Activated CD4-positive, alpha-beta memory T cell treated with anti-CD3 and anti-CD28 coated beads for 36 hours (primary cell): ENCODE measurements at regions of chrX and their contacts with region 1.

Region 1: GRCh38 chrX:155216179-155216939 is at the start of gene VBP1:
- DNase-seq: peak; percentile 92
- H3K4me3 Mint-ChIP-seq: peak within 1 kb of the TSS; percentile 87
- H3K27ac Mint-ChIP-seq: peak within 1 kb of the TSS; percentile 83
- H3K4me1 Mint-ChIP-seq: peaks cover 19% of the 10 kb centered on the region
- H3K27me3 Mint-ChIP-seq: no peaks in the 10 kb centered on the region
- total RNA-seq, gene VBP1: 89.7 to 100 TPM

Region 2: GRCh38 chrX:155094468-155095061 is 121.8 kb before region 1 on chrX:
- CTCF ChIA-PET with region 1: interaction called, 5 read pairs
- POLR2A ChIA-PET with region 1: no interaction called
- intact Hi-C with region 1: loop called (anchors 10 kb)
- DNase-seq: peak; percentile 17
- H3K4me3 Mint-ChIP-seq: no peak overlapping the region
- H3K27ac Mint-ChIP-seq: no peak overlapping the region
- H3K4me1 Mint-ChIP-seq: peaks cover 6% of the 10 kb centered on the region
- H3K27me3 Mint-ChIP-seq: no peaks in the 10 kb centered on the region

Region 3: GRCh38 chrX:155188786-155189185 is 27.6 kb before region 1 on chrX:
- CTCF ChIA-PET with region 1: interaction called, 6 read pairs
- POLR2A ChIA-PET with region 1: interaction called, 3 read pairs
- intact Hi-C with region 1: loop called (anchors 1 kb)
- DNase-seq: peak; percentile 9
- H3K4me3 Mint-ChIP-seq: no peak overlapping the region
- H3K27ac Mint-ChIP-seq: peak overlapping the region; percentile 65
- H3K4me1 Mint-ChIP-seq: peaks cover 36% of the 10 kb centered on the region
- H3K27me3 Mint-ChIP-seq: no peaks in the 10 kb centered on the region

Region 4: DNA sequence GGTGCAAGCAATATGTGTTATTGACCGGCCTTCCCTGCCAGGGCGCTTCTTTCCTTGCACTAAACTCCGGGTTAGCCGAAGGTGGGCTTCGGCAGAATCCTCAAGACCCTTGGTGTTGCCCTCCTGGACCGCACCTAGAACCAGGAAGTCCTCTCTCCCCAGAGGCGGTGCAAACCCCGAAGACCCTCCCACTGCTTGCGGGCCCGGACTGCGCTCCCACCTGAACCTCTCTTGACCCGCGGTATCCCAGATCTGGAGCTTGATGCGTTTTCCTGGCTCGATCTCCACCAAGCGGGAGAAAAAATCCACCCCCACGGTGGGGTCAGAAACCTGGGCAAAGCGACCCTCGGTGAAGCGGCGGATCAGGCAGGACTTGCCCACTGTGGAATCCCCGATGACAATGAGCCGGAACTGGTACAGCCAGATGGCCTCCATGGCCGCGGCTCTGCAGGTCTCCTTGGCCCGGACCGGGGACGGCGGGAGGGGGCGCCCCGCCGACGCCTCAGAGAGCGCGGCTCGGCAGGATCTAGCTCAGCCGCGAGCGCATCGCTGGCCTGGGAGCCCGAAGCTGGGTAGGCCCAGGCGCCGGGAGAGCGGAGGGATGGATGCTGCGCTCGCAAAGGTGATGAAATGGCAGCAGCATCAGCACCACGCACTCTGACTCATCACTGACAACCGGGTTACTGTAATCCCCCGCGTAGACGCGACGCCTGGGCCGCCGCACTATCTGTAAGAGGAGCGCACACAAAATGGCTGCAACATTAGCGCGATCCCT is 47.7 kb after region 1 on chrX and contains the start of gene RAB39B:
- CTCF ChIA-PET with region 1: no interaction called
- POLR2A ChIA-PET with region 1: interaction called, 3 read pairs
- intact Hi-C with region 1: loop called (anchors 1 kb)
- DNase-seq: peak; percentile 86
- H3K4me3 Mint-ChIP-seq: peak within 1 kb of the TSS; percentile 68
- H3K27ac Mint-ChIP-seq: peak within 1 kb of the TSS; percentile 94
- H3K4me1 Mint-ChIP-seq: peaks cover 24% of the 10 kb centered on the region
- H3K27me3 Mint-ChIP-seq: no peaks in the 10 kb centered on the region
- total RNA-seq, gene RAB39B: 13.6 to 15.3 TPM